Psoas muscle (tissue), 8 donors: ENCODE measurements at regions of chr15 and their contacts with region 1.

Region 1: DNA sequence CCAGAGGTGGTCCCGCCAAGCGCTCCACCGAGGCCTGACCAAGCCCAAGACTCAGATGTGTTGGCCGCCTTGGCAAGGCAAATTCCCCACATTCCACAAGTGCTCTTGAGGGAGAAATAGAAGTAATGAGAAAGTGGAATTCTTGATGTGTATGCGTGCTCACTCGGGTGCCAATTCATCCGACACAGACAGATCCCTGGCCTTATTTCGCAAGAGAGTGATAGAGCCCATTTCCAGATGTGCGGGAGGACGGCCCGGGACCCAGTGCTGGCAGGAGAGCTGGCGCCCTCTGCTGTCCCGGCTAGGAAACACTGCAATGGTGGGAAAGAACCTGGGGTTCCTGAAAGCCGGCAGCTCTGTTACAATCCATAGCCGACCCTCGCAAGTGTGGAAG is 76.0 kb downstream of the HMG20A start:
- DNase-seq: peak; percentile 86 to 93
- ATAC-seq: peak; percentile 75 to 89 (median 84)
- H3K4me3 ChIP-seq: peak overlapping the region; percentile 41
- H3K27ac ChIP-seq: peak overlapping the region; percentile 79
- H3K4me1 ChIP-seq: peaks cover 26% of the 10 kb centered on the region
- H3K27me3 ChIP-seq: no peaks in the 10 kb centered on the region
- CTCF ChIP-seq: peak; percentile 91

Region 2: DNA sequence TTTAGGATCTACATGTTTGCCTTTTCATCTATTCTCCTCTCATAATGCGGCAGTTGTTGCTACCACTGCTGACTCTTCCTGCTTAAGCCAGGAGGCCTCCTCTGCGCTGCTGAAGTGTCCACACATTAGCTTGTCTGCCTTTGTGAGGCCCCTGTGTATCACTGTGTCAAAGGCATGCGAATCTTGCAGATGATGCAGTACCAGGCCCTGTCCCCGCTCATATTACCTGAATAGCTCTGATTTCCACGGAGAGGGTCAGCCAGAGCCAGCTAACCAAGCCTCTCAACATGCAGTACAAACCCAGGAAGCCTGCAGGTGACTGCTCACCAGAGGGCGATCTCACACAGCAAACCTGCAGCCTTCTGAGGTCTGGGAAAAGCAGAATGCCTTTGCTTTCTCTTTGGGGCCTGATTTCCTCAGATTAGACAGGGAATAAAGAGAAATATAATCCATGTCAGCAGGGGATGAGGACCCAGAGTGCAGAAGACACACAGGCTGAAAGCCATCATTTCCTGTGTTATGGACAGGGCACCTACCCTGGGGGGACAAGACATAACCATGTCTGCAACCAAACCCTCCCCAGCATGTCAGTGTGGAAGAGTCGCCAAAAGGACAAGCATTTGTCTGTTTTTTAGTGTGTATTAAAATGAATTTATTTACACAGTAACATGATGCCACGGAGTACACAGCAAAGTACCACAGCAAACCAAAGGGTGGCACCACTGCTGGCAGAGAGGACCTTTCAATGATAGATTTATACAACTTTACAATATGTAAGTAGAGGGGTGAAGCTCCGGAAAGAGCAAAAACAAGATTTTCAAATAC is 389.0 kb before region 1 on chr15:
- intact Hi-C with region 1: loop called in 1 of 2 experiments (anchors 5 kb)
- DNase-seq: peak; percentile 47 to 73
- ATAC-seq: peak; percentile 85 to 94 (median 92)
- H3K4me3 ChIP-seq: no peak overlapping the region
- H3K27ac ChIP-seq: peak overlapping the region; percentile 56
- H3K4me1 ChIP-seq: peaks cover 22% of the 10 kb centered on the region
- H3K27me3 ChIP-seq: no peaks in the 10 kb centered on the region
- CTCF ChIP-seq: peak; percentile 73

Region 3: DNA sequence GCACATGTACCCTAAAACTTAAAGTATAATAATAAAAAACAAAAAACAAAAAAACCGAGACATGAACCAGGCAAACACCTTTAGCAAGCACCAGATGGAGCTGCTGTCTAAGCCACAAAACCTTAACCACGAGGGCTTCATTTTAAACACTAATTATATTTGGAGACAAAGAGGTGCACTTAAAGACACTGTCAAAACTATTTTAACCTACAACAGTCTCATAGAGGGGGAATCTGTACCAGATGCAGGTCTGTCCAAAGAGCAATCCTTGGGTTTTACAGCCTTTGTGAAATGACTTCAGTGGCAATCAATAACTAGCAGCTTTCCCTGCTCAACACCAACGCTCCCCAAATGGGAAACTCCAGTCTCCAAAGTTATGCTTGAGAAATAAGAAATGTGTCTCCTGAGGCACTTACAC is 310.1 kb before region 1 on chr15:
- intact Hi-C with region 1: loop called in 1 of 2 experiments (anchors 5 kb)
- DNase-seq: no peak
- ATAC-seq: peak in 2 of 4 donors; percentile 37 to 42
- H3K4me3 ChIP-seq: no peak overlapping the region
- H3K27ac ChIP-seq: peak overlapping the region; percentile 62
- H3K4me1 ChIP-seq: no peaks in the 10 kb centered on the region
- H3K27me3 ChIP-seq: no peaks in the 10 kb centered on the region
- CTCF ChIP-seq: peak; percentile 50

Region 4: DNA sequence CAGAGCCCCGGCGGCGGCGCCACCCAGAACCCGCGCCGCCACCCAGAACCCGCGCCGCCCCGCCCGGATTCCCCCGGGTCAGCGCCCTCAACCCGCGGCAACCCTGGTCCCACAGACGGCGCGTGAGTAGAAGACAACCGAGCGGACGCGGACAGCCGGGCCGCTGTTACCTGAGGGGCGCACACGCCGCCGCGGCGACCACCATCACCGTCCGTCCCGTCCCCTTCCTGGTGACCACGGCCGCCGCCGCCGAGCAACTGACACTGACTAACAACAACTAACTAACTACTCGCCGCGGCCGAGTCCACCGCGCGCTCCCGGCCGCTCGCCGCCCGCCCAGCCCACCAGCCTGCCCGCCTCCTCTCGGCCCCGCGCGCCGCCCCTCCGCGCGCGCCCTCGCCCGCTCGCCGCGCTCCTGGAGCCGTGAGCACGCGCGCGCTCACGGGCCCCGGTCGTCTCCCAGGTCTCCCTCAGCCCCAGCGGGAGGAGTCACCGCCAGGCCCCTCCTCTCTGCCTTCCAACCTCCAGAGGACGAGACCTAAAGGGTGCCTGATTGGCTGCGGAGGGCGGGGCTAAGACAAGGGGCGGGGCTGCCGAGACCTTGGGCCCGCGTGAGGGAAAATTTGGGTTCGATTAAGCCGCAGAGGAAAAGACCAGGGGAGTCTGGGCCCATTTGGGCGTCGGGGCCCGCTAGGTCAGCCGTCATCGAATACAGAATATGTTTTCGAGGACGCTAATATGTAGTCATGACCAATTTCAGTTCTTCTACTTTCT is 76.7 kb before region 1 on chr15 and contains the start of gene PEAK1:
- intact Hi-C with region 1: loop called (anchors 1 to 5 kb)
- DNase-seq: peak; percentile 100
- ATAC-seq: peak; percentile 96 to 99 (median 98)
- H3K4me3 ChIP-seq: peak within 1 kb of the TSS; percentile 91
- H3K27ac ChIP-seq: peak within 1 kb of the TSS; percentile 97
- H3K4me1 ChIP-seq: peaks cover 58% of the 10 kb centered on the region
- H3K27me3 ChIP-seq: no peaks in the 10 kb centered on the region
- CTCF ChIP-seq: no peak
- total RNA-seq, gene PEAK1: 25.3 to 32.1 (median 28.8) TPM

Region 5: GRCh38 chr15:77543159-77543882 is 46.6 kb after region 1 on chr15:
- intact Hi-C with region 1: loop called in 1 of 2 experiments (anchors 5 kb)
- DNase-seq: peak; percentile 86 to 93
- ATAC-seq: peak; percentile 94 to 98 (median 95)
- H3K4me3 ChIP-seq: peak overlapping the region; percentile 66
- H3K27ac ChIP-seq: peak overlapping the region; percentile 58
- H3K4me1 ChIP-seq: peaks cover 5% of the 10 kb centered on the region
- H3K27me3 ChIP-seq: no peaks in the 10 kb centered on the region
- CTCF ChIP-seq: peak; percentile 98